IMR-90 (cell line): ENCODE measurements at regions of chr20 and their contacts with region 1.

Region 1: DNA sequence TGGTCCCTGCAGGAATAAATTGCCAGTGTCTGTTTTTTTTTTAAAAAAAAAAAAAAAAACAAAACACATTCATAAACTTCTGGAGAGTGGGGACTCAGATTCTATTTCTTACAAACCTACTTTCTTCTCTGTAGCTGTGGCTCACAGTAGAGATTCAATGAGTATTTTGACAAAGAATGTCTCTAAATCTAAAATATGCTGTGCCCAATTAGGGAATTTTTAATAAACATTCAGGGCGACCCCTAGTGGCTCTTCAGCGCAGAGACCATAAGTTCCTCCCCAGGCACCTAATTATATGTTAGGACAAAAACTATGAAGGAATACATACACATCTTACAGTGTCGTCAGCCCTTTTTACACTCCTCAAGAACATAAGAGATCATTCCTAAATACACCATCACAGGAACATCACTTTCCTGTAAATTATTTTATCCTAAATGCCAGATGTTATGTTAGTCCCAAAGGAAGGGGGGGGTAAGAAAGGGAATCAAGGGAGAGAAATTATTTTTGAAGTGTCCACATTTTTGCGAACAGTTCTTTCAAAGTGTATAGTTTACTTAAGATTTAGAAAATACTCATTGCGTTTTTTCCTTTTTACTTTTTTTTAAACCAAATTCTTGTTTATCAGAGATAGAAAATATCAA is 21.8 kb upstream of the NAA20 start:
- DNase-seq: peak; percentile 64
- ATAC-seq: peak; percentile 21
- H3K4me3 ChIP-seq: no peak overlapping the region
- H3K27ac ChIP-seq: peak overlapping the region; percentile 79; the same call in 1 of the 2 replicates
- H3K4me1 ChIP-seq: peaks cover 28% of the 10 kb centered on the region
- H3K27me3 ChIP-seq: no peaks in the 10 kb centered on the region
- CTCF ChIP-seq: peak; percentile 81
- POLR2A ChIP-seq: no peak
- RAD21 ChIP-seq: peak; percentile 70

Region 2: GRCh38 chr20:19850198-19850533 is 145.2 kb before region 1 on chr20:
- CTCF ChIA-PET with region 1: no interaction called
- POLR2A ChIA-PET with region 1: no interaction called
- dilution Hi-C with region 1: no loop called
- in situ Hi-C with region 1: no loop called
- intact Hi-C with region 1: no loop called
- DNase-seq: no peak
- ATAC-seq: peak; percentile 53
- H3K4me3 ChIP-seq: no peak overlapping the region
- H3K27ac ChIP-seq: no peak overlapping the region
- H3K4me1 ChIP-seq: peaks cover 8% of the 10 kb centered on the region
- H3K27me3 ChIP-seq: no peaks in the 10 kb centered on the region
- CTCF ChIP-seq: no peak
- POLR2A ChIP-seq: no peak
- RAD21 ChIP-seq: no peak

Region 3: GRCh38 chr20:19889011-19889953 is 106.1 kb before region 1 on chr20:
- CTCF ChIA-PET with region 1: interaction called, 4 read pairs
- POLR2A ChIA-PET with region 1: no interaction called
- dilution Hi-C with region 1: no loop called
- in situ Hi-C with region 1: no loop called
- intact Hi-C with region 1: loop called (anchors 5 kb)
- DNase-seq: peak; percentile 76
- ATAC-seq: peak; percentile 46
- H3K4me3 ChIP-seq: peak overlapping the region; percentile 57
- H3K27ac ChIP-seq: peak overlapping the region; percentile 100
- H3K4me1 ChIP-seq: peaks cover 33% of the 10 kb centered on the region
- H3K27me3 ChIP-seq: no peaks in the 10 kb centered on the region
- CTCF ChIP-seq: no peak
- POLR2A ChIP-seq: no peak
- RAD21 ChIP-seq: no peak

Region 4: GRCh38 chr20:20993372-20993771 is 998.0 kb after region 1 on chr20:
- CTCF ChIA-PET with region 1: no interaction called
- POLR2A ChIA-PET with region 1: no interaction called
- dilution Hi-C with region 1: no loop called
- in situ Hi-C with region 1: no loop called
- intact Hi-C with region 1: no loop called
- DNase-seq: no peak
- ATAC-seq: no peak
- H3K4me3 ChIP-seq: no peak overlapping the region
- H3K27ac ChIP-seq: no peak overlapping the region
- H3K4me1 ChIP-seq: no peaks in the 10 kb centered on the region
- H3K27me3 ChIP-seq: no peaks in the 10 kb centered on the region
- CTCF ChIP-seq: no peak
- POLR2A ChIP-seq: no peak
- RAD21 ChIP-seq: no peak